ENCODE measurements at regions of chr22 and their contacts with region 1.

Region 1: DNA sequence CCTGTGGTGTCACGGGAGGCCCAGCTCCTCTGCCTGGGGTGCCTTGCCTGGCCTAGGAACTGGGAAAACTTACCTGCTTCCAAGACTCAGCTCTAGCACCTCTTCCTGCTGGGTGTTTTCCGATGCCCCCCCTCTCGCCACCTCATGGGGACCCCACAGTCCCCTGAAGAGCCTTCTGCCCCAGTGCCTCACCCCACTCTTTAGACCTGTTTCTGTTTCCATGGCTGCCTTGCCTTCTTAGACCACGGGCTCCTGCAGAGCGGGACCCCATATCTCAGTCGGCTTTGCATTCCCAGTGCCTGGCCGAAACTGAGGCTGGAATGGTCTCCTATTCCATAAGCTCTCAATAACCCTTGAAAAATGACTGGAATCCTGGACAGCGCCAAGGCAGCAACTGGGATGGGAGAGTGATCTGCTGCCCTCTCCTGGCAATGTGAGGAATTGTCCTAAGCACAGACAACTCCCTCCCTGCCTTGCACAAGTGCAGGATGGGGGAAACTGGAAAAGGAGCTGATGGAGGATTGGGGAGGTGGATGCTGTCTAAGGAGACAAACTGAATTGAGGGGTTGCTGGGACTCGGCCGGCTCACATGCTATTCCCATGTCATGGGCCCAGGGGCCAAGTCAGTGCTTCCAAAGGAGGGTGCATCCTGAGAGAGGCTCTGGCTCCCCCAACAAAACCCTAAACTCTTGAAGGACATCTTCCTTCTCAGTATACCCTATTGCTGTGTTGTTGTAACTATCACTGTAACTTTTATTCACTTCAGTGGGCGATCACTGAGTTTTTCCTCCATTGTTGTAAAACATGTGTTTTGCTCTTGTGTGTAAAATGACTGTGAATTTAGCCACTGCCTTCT is 26.6 kb upstream of the IL17RA start:
- DNase-seq: peak; percentile 51
- ATAC-seq: peak; percentile 94
- H3K4me3 ChIP-seq: no peak overlapping the region
- H3K27ac ChIP-seq: no peak overlapping the region
- H3K4me1 ChIP-seq: no peaks in the 10 kb centered on the region
- H3K27me3 ChIP-seq: no peaks in the 10 kb centered on the region
- CTCF ChIP-seq: peak; percentile 89

Region 2: GRCh38 chr22:16917144-16918003 is 140.8 kb before region 1 on chr22:
- CTCF ChIA-PET with region 1: interaction called, 8 read pairs
- POLR2A ChIA-PET with region 1: no interaction called
- in situ Hi-C with region 1: no loop called
- intact Hi-C with region 1: loop called (anchors 1 kb)
- DNase-seq: peak; percentile 39
- ATAC-seq: peak; percentile 87
- H3K4me3 ChIP-seq: no peak overlapping the region
- H3K27ac ChIP-seq: no peak overlapping the region
- H3K4me1 ChIP-seq: no peaks in the 10 kb centered on the region
- H3K27me3 ChIP-seq: no peaks in the 10 kb centered on the region; the same call in 1 of the 2 replicates
- CTCF ChIP-seq: peak; percentile 77

Region 3: DNA sequence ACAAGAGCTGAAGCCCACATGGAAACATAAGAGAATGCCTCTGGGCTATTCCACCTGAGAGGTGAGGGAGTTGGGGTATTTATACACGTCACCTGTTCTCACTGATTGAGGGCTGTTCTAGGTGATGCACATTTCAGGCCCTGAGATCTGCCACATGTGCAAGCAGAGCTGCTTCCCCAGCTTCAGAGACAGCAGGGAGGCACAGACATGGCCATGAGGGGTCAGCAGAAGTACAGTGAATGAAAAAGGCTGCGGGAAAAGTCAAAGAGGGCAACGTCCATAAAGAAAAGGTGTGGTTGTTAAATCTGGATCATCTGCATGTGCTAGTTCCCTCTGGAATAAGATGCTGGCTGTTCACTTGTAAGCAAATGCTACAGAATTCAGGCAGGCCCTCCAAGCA is 125.6 kb before region 1 on chr22:
- CTCF ChIA-PET with region 1: interaction called, 13 read pairs
- POLR2A ChIA-PET with region 1: no interaction called
- in situ Hi-C with region 1: no loop called
- intact Hi-C with region 1: loop called (anchors 1 kb)
- DNase-seq: no peak
- ATAC-seq: peak; percentile 68; the same call in 1 of the 2 replicates
- H3K4me3 ChIP-seq: no peak overlapping the region
- H3K27ac ChIP-seq: no peak overlapping the region
- H3K4me1 ChIP-seq: no peaks in the 10 kb centered on the region
- H3K27me3 ChIP-seq: no peaks in the 10 kb centered on the region; the same call in 1 of the 2 replicates
- CTCF ChIP-seq: peak; percentile 34

Measured in Panc1 (cell line).